ENCODE measurements at regions of chr1 and their contacts with region 1.

Region 1: GRCh38 chr1:3746830-3747521 is 5.3 kb upstream of the CCDC27 start:
- DNase-seq: peak; percentile 90

Region 2: GRCh38 chr1:3631330-3632262 is 115.4 kb before region 1 on chr1:
- in situ Hi-C with region 1: no loop called
- DNase-seq: no peak

Region 3: DNA sequence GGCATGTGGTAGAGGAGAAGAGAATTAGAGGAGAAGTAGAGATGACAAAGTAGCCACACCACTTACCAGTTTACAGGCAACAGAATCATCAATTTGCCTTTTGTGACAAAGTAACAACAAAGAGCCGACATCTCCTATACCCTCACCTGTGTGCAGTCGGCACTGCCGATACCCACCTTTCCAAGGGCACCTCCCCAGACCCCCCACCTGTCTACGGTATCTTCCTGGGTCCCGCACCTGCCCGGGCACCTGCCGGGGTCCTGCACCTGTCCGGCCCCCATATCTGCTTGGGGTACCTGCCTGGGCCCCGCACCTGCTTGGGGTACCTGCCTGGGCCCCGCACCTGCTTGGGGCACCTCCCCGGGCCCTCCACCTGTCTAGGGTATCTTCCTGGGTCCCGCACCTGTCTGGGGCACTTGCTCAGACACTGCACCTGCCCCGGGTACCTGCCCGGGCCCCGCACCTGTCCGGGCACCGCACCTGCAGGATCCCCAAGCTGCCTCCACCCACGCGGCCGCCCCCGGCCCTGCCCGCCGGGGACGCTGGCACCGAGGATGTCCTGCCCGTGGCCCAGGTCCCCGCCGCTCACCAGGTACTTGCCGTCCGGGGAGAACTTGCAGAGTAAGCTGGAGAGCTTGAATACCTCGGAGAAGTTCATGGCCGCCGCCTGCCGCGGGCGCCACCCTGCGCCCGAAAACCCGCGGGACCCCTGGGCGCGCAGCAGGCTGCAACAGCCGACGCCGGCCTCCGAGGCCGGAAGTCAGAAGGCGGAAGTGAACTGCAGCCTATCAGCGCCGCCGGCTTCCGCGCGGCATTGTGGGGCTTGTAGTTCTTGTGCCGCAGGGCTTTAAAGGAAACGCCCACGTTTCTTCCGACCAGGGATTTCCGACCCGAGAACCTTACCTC is 97.4 kb before region 1 on chr1 and contains the start of gene WRAP73:
- in situ Hi-C with region 1: loop called (anchors 10 kb)
- DNase-seq: peak; percentile 91
- total RNA-seq, gene WRAP73: 34.5 and 40.8 TPM in 2 replicates

Region 4: GRCh38 chr1:3702990-3703728 is 43.8 kb before region 1 on chr1:
- in situ Hi-C with region 1: no loop called
- DNase-seq: peak; percentile 38

Measured in G401 (cell line).